ENCODE measurements at regions of chr15 and their contacts with region 1.

Region 1: DNA sequence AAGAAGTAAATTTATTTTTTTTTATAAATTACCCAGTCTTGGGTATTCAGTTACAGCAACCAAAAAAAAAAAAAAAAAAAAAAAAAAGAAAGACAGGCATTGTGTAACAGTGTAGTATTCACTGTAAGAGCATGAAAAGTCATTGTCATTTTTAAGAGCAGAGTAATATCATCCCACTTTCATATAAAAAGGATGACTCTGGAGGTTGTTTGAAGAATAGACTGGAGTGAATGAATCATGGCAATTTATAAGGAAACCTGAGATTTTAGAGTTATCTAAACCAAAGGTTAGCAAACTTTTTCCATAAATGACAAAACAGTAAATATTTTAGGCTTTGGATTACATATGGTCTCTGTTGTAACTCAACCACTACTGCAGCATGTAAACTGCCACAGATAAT is 794.9 kb downstream of the NTRK3 start:
- DNase-seq: no peak
- ATAC-seq: no peak
- H3K4me3 ChIP-seq: no peak overlapping the region
- H3K27ac ChIP-seq: no peak overlapping the region
- H3K4me1 ChIP-seq: no peaks in the 10 kb centered on the region
- H3K27me3 ChIP-seq: no peaks in the 10 kb centered on the region
- CTCF ChIP-seq: no peak
- POLR2A ChIP-seq: no peak

Region 2: DNA sequence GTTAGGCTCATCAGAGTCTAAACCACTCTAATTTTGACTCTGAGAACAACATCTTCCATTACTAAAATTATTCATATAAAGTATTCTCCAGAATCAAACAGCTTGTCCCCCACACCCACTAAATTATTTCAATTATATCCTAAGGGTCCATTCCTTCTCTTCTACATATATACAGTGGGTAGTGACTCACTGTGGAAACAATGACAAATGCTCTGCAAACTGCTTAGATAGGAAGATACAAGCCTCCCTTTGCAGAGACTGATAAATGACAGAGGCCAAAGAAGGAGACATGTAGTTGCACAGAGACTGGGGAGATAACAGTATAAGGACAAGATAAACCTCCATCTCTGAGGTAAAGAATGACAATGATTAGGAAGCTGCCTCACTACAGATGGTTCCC is 294.6 kb before region 1 on chr15:
- in situ Hi-C with region 1: no loop called
- intact Hi-C with region 1: no loop called
- DNase-seq: no peak
- ATAC-seq: no peak
- H3K4me3 ChIP-seq: no peak overlapping the region
- H3K27ac ChIP-seq: no peak overlapping the region
- H3K4me1 ChIP-seq: no peaks in the 10 kb centered on the region
- H3K27me3 ChIP-seq: no peaks in the 10 kb centered on the region
- CTCF ChIP-seq: no peak
- POLR2A ChIP-seq: no peak

Region 3: DNA sequence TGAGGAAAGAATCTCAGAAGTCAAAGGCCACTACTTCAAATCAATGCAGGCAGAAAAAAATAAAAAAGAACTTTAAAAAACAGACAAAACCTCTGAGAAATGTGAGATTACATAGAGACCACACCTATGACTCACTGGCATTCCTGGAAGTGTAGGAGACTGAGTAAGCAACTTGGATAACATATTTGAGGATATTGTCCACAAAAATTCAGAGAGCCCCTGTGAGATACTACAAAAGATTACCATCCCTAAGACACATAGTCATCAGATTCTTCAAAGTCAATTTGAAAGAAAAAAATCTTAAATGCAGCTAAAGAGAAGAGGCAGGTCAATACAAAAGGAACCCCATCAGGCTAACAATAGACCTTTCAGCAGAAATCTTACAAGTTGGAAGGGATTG is 92.4 kb before region 1 on chr15:
- in situ Hi-C with region 1: loop called in 1 of 4 experiments (anchors 25 kb)
- intact Hi-C with region 1: no loop called
- DNase-seq: no peak
- ATAC-seq: no peak
- H3K4me3 ChIP-seq: no peak overlapping the region
- H3K27ac ChIP-seq: no peak overlapping the region
- H3K4me1 ChIP-seq: no peaks in the 10 kb centered on the region
- H3K27me3 ChIP-seq: no peaks in the 10 kb centered on the region
- CTCF ChIP-seq: no peak
- POLR2A ChIP-seq: no peak

Measured in gastrocnemius medialis (tissue), 4 donors.